PC-3 (cell line): ENCODE measurements at regions of chr1 and their contacts with region 1.

Region 1: DNA sequence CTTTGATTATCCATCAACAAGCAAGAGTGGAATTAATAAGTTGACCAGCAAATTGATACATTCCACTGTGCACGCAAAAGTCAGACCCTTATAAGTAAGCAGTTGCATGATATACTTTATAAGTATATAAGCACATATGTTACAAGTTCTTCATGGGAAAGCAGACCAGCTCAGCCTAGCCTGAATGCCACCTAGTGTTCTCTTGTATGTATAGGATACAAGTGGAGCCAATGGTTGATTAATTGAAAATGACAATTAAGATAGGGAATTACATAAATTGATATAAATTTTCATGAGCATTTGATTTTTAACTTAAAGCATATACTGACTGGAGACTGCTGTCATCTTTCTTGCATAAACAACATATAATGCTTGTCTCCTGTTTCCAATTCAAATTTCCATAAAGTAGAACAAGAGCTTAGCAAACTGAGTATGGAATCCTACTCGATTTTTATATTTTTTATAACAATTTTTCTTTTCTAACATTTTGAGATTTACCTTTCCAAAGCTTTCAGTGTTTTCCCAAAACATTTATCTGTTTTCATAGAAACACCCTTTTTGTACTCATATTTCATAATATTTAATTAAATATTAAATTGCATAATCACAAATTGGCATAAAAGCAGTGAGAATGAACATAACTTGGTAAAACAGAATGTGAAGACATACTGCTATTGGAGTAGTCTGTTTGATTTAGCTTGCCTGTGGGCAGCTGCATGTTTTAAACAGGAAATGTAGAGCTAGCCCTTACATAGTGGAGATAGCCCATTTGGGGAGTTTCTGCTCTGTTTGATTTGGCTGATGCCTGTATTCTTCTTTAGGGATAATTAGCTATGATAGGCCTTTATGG is 62.8 kb downstream of the MAGI3 start:
- DNase-seq: peak; percentile 68
- ATAC-seq: peak; percentile 46
- H3K4me3 ChIP-seq: no peak overlapping the region
- H3K27ac ChIP-seq: no peak overlapping the region
- H3K4me1 ChIP-seq: peaks cover 27% of the 10 kb centered on the region
- H3K27me3 ChIP-seq: no peaks in the 10 kb centered on the region
- CTCF ChIP-seq: peak; percentile 84

Region 2: GRCh38 chr1:113140588-113141446 is 312.3 kb before region 1 on chr1:
- CTCF ChIA-PET with region 1: no interaction called
- POLR2A ChIA-PET with region 1: no interaction called
- intact Hi-C with region 1: loop called (anchors 1 kb)
- DNase-seq: peak; percentile 79
- ATAC-seq: peak; percentile 80
- H3K4me3 ChIP-seq: no peak overlapping the region
- H3K27ac ChIP-seq: peak overlapping the region; percentile 10
- H3K4me1 ChIP-seq: peaks cover 21% of the 10 kb centered on the region
- H3K27me3 ChIP-seq: no peaks in the 10 kb centered on the region
- CTCF ChIP-seq: peak; percentile 96

Region 3: GRCh38 chr1:113325039-113325438 is 128.1 kb before region 1 on chr1:
- CTCF ChIA-PET with region 1: no interaction called
- POLR2A ChIA-PET with region 1: no interaction called
- intact Hi-C with region 1: loop called (anchors 5 kb)
- DNase-seq: peak; percentile 67
- ATAC-seq: peak; percentile 48
- H3K4me3 ChIP-seq: no peak overlapping the region
- H3K27ac ChIP-seq: peak overlapping the region; percentile 47
- H3K4me1 ChIP-seq: peaks cover 44% of the 10 kb centered on the region
- H3K27me3 ChIP-seq: no peaks in the 10 kb centered on the region
- CTCF ChIP-seq: no peak

Region 4: DNA sequence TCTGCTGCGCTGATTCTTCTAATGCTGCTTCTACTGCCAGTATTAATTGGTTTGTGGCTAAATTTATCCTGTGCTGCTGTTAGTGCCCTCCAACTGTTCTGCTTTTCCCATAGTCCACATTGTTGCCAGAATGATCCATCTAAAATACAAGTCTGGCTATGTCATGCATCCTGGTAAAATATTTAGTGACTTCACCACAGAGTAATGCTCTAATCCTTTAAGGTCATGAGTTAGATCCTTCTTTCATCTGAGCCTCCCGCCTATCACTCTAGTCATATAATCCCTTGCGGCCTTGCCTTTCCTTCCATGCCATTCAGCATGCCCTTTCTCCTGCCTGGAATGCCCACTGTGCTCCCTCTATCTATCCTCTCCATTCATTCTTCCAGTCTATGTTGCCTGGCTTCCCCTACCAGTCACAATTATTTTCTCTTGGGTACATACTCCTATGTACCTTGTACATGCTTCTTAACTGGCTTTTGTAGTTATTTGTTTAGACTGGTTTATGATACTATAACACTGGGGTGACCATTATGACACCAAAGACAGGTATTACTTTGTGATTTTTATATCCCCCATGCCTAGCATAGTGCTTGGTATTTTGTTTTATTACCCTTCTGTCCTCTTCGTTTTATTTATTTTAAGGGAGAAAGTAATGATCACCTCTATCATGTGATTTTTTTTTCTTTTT is 81.1 kb after region 1 on chr1:
- CTCF ChIA-PET with region 1: interaction called, 3 read pairs
- POLR2A ChIA-PET with region 1: interaction called, 3 read pairs
- intact Hi-C with region 1: loop called (anchors 2 kb)
- DNase-seq: no peak
- ATAC-seq: no peak
- H3K4me3 ChIP-seq: no peak overlapping the region
- H3K27ac ChIP-seq: no peak overlapping the region
- H3K4me1 ChIP-seq: peaks cover 21% of the 10 kb centered on the region
- H3K27me3 ChIP-seq: no peaks in the 10 kb centered on the region
- CTCF ChIP-seq: no peak

Region 5: GRCh38 chr1:113677250-113678158 is 224.4 kb after region 1 on chr1:
- CTCF ChIA-PET with region 1: no interaction called
- POLR2A ChIA-PET with region 1: no interaction called
- intact Hi-C with region 1: loop called (anchors 1 kb)
- DNase-seq: peak; percentile 75
- ATAC-seq: 0 out of 2 replicates have a peak, but pooled peaks have one; percentile 18
- H3K4me3 ChIP-seq: no peak overlapping the region
- H3K27ac ChIP-seq: no peak overlapping the region
- H3K4me1 ChIP-seq: peaks cover 38% of the 10 kb centered on the region
- H3K27me3 ChIP-seq: no peaks in the 10 kb centered on the region
- CTCF ChIP-seq: peak; percentile 85